Right lobe of liver (tissue), 6 donors: ENCODE measurements at regions of chr6 and their contacts with region 1.

Region 1: GRCh38 chr6:36094753-36095496 is 35.4 kb upstream of the MAPK13 start:
- DNase-seq: peak; percentile 80 to 84 (median 83)
- ATAC-seq: peak; percentile 88 to 94 (median 90)
- H3K4me3 ChIP-seq: peak overlapping the region in 2 of 3 donors; percentile 14 to 24
- H3K27ac ChIP-seq: peak overlapping the region; percentile 64 to 68 (median 65)
- H3K4me1 ChIP-seq: peaks cover 0 to 25% (median 14%) of the 10 kb centered on the region in 4 donors
- H3K27me3 ChIP-seq: no peaks in the 10 kb centered on the region
- CTCF ChIP-seq: peak; percentile 92 to 99 (median 98)
- POLR2A ChIP-seq: no peak

Region 2: GRCh38 chr6:36027501-36028087 is 67.3 kb before region 1 on chr6 and contains the start of gene MAPK14:
- intact Hi-C with region 1: loop called in 1 of 2 experiments (anchors 5 kb)
- DNase-seq: peak; percentile 98 to 99 (median 99)
- ATAC-seq: peak; percentile 92 to 94 (median 92)
- H3K4me3 ChIP-seq: peak within 1 kb of the TSS; percentile 86 to 96 (median 92)
- H3K27ac ChIP-seq: peak within 1 kb of the TSS; percentile 95 to 97 (median 95)
- H3K4me1 ChIP-seq: peaks cover 0 to 23% (median 5%) of the 10 kb centered on the region in 4 donors
- H3K27me3 ChIP-seq: no peaks in the 10 kb centered on the region
- CTCF ChIP-seq: peak; percentile 90 to 95 (median 92)
- POLR2A ChIP-seq: peak; percentile 99
- total RNA-seq, gene MAPK14: 37.9 to 53.3 (median 45.3) TPM